CD4-positive, alpha-beta memory T cell (primary cell): ENCODE measurements at regions of chr19 and their contacts with region 1.

Region 1: GRCh38 chr19:10380313-10381102 is at the start of gene TYK2:
- DNase-seq: peak; percentile 96 to 98 (median 97)
- H3K4me3 ChIP-seq: peak within 1 kb of the TSS; percentile 79 to 91
- H3K4me3 Mint-ChIP-seq: peak within 1 kb of the TSS; percentile 93 to 98 (median 96)
- H3K27ac ChIP-seq: peak within 1 kb of the TSS; percentile 89
- H3K27ac Mint-ChIP-seq: peak within 1 kb of the TSS; percentile 81 to 99 (median 98)
- H3K4me1 ChIP-seq: peaks cover 13% of the 10 kb centered on the region
- H3K4me1 Mint-ChIP-seq: peaks cover 18 to 28% (median 23%) of the 10 kb centered on the region in 4 donors
- H3K27me3 ChIP-seq: no peaks in the 10 kb centered on the region
- H3K27me3 Mint-ChIP-seq: no peaks in the 10 kb centered on the region
- total RNA-seq, gene TYK2: 297 to 314 TPM

Region 2: DNA sequence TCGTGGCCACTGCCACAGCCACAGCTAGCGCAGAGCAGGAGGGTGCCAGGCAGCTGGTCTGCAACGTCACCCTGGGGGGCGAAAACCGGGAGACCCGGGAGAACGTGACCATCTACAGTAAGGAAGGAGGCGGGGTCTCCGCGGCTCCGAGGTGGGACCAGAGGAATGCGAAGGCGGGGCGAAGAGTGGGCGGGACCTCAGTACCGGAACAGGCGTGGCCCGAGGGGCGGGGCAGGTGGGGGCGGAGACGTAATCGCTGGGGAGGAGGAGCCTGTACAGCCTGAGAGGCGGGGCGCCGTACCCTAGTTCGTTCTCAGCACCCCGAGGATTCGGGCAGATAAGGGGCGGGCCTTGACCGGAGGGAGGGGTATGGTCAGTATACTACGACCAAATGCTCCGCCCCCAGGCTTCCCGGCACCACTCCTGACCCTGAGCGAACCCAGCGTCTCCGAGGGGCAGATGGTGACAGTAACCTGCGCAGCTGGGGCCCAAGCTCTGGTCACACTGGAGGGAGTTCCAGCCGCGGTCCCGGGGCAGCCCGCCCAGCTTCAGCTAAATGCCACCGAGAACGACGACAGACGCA is 88.2 kb before region 1 on chr19:
- CTCF ChIA-PET with region 1: no interaction called
- POLR2A ChIA-PET with region 1: interaction called, 27 read pairs
- intact Hi-C with region 1: no loop called
- DNase-seq: peak; percentile 49 to 68 (median 55)
- H3K4me3 ChIP-seq: peak overlapping the region; percentile 34 to 58
- H3K4me3 Mint-ChIP-seq: peak overlapping the region; percentile 67 to 89 (median 79)
- H3K27ac ChIP-seq: no peak overlapping the region
- H3K27ac Mint-ChIP-seq: peak overlapping the region in 4 of 7 donors; percentile 37 to 89 (median 68)
- H3K4me1 ChIP-seq: peaks cover 82% of the 10 kb centered on the region
- H3K4me1 Mint-ChIP-seq: peaks cover 36 to 73% (median 56%) of the 10 kb centered on the region in 4 donors
- H3K27me3 ChIP-seq: peaks cover 67% of the 10 kb centered on the region
- H3K27me3 Mint-ChIP-seq: peaks cover 43 to 48% of the 10 kb centered on the region in 2 donors

Region 3: GRCh38 chr19:10339380-10339960 is 41.0 kb before region 1 on chr19 and contains the start of gene ICAM3:
- CTCF ChIA-PET with region 1: no interaction called
- POLR2A ChIA-PET with region 1: interaction called, 23 read pairs
- intact Hi-C with region 1: loop called (anchors 1 kb)
- DNase-seq: peak; percentile 44 to 65 (median 51)
- H3K4me3 ChIP-seq: peak within 1 kb of the TSS; percentile 39 to 80
- H3K4me3 Mint-ChIP-seq: peak within 1 kb of the TSS; percentile 91 to 99 (median 96)
- H3K27ac ChIP-seq: peak within 1 kb of the TSS; percentile 82
- H3K27ac Mint-ChIP-seq: peak within 1 kb of the TSS; percentile 85 to 97 (median 96)
- H3K4me1 ChIP-seq: peaks cover 38% of the 10 kb centered on the region
- H3K4me1 Mint-ChIP-seq: peaks cover 14 to 46% (median 25%) of the 10 kb centered on the region in 4 donors
- H3K27me3 ChIP-seq: no peaks in the 10 kb centered on the region
- H3K27me3 Mint-ChIP-seq: no peaks in the 10 kb centered on the region
- total RNA-seq, gene ICAM3: 191 to 193 TPM